Left lung (tissue), 14 donors: ENCODE measurements at regions of chr12 and their contacts with region 1.

Region 1: GRCh38 chr12:115752913-115753726 is 524.4 kb downstream of the MED13L start:
- DNase-seq: peak in 2 of 4 donors; percentile 68 to 83
- ATAC-seq: peak; percentile 94
- H3K4me3 ChIP-seq: no peak overlapping the region
- H3K27ac ChIP-seq: no peak overlapping the region
- H3K4me1 ChIP-seq: peaks cover 0 to 5% of the 10 kb centered on the region in 2 donors
- H3K27me3 ChIP-seq: peaks cover 10 to 41% of the 10 kb centered on the region in 2 donors
- CTCF ChIP-seq: peak; percentile 47 to 59

Region 2: GRCh38 chr12:114668151-114668885 is 1084.8 kb before region 1 on chr12:
- intact Hi-C with region 1: loop called in 1 of 2 experiments (anchors 5 kb)
- DNase-seq: peak; percentile 64 to 86 (median 82)
- ATAC-seq: peak; percentile 89
- H3K4me3 ChIP-seq: peak overlapping the region; percentile 15 to 29
- H3K27ac ChIP-seq: peak overlapping the region; percentile 72 to 87
- H3K4me1 ChIP-seq: peaks cover 4 to 14% of the 10 kb centered on the region in 2 donors
- H3K27me3 ChIP-seq: peaks cover 43 to 100% of the 10 kb centered on the region in 2 donors
- CTCF ChIP-seq: peak; percentile 42